ENCODE measurements at regions of chr11 and their contacts with region 1.

Region 1: DNA sequence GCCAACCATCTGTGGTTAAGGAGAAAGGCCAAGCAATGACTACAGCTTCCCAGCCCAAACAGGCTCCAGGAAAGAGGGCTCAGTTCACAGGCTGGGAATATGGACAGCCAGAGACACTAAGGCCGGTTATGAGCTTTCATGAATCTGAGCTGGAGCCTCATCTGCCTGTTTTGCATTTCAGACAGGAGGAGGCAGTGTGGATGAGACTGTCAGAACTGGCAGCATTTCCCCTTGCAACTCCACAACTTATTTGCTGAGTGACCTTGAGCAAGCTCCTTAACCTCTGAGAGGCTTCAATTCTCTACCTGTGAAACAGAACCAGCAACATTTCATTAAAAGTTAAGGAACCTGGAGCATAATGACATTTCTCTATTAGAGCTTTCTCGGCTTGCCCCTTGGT is 264.0 kb downstream of the ETS1 start:
- DNase-seq: peak; percentile 65
- H3K4me3 Mint-ChIP-seq: no peak overlapping the region
- H3K27ac Mint-ChIP-seq: peak overlapping the region; percentile 98
- H3K4me1 Mint-ChIP-seq: peaks cover 91% of the 10 kb centered on the region
- H3K27me3 Mint-ChIP-seq: no peaks in the 10 kb centered on the region

Region 2: GRCh38 chr11:128172046-128172878 is 151.1 kb before region 1 on chr11:
- CTCF ChIA-PET with region 1: interaction called, 14 read pairs
- POLR2A ChIA-PET with region 1: interaction called, 5 read pairs
- DNase-seq: peak; percentile 87
- H3K4me3 Mint-ChIP-seq: no peak overlapping the region
- H3K27ac Mint-ChIP-seq: no peak overlapping the region
- H3K4me1 Mint-ChIP-seq: peaks cover 13% of the 10 kb centered on the region
- H3K27me3 Mint-ChIP-seq: peaks cover 7% of the 10 kb centered on the region

Region 3: DNA sequence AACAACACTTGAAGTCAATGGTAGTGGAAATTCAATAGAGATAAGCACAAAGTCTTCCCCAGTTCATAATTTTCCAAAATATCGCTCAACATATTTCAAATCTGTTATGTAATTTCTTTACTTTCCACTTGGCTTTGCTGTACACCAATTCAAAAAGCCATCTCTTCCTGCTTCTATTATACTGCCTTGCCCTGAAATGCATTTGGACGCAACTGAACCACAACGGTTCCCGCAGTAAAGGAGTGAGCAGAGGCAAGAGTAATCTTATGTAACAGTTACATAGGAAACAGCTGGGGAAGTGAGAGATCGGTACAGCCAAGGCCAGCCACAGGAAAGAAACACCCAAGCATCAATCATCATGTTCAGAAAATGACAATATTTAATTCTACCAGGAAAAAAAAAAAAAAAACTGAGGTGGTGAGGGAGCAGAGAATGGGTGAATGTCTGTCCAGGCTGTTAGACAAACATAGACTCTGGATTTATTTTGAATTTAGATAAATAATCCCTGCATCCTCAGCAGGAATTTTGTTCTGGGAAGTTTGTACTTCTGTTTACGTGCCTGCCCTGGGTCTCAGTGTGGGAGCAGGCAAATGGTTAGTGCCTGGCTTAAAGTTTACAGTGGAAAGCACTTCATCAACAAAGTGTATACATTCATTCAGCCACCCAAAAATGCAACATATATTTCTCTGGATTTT is 128.2 kb before region 1 on chr11:
- CTCF ChIA-PET with region 1: no interaction called
- POLR2A ChIA-PET with region 1: no interaction called
- DNase-seq: peak; percentile 53
- H3K4me3 Mint-ChIP-seq: no peak overlapping the region
- H3K27ac Mint-ChIP-seq: no peak overlapping the region
- H3K4me1 Mint-ChIP-seq: peaks cover 33% of the 10 kb centered on the region
- H3K27me3 Mint-ChIP-seq: peaks cover 2% of the 10 kb centered on the region

Region 4: GRCh38 chr11:128311742-128312719 is 11.3 kb before region 1 on chr11:
- CTCF ChIA-PET with region 1: interaction called, 6 read pairs
- POLR2A ChIA-PET with region 1: interaction called, 12 read pairs
- DNase-seq: no peak
- H3K4me3 Mint-ChIP-seq: no peak overlapping the region
- H3K27ac Mint-ChIP-seq: no peak overlapping the region
- H3K4me1 Mint-ChIP-seq: peaks cover 49% of the 10 kb centered on the region
- H3K27me3 Mint-ChIP-seq: no peaks in the 10 kb centered on the region

Region 5: DNA sequence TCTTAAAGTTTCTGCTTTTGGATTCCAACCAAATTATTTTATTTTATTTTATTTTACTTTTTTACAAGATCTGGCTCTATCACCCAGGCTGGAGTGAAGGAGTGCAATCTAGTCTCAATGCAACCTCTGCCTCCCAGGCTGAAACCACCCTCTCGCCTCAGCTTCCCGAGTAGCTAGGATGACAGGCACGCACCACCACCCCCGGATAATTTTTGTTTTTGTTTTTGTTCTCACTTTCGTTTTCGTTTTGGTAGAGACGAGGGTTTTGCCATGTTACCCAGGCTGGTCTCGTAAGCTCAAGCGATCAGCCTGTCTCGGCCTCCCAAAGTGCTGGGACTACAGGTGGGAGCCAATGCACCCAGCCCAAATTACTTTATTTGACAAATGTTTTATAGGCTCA is 44.2 kb after region 1 on chr11:
- CTCF ChIA-PET with region 1: interaction called, 6 read pairs
- POLR2A ChIA-PET with region 1: interaction called, 14 read pairs
- DNase-seq: peak; percentile 58
- H3K4me3 Mint-ChIP-seq: peak overlapping the region; percentile 54
- H3K27ac Mint-ChIP-seq: peak overlapping the region; percentile 64
- H3K4me1 Mint-ChIP-seq: peaks cover 17% of the 10 kb centered on the region
- H3K27me3 Mint-ChIP-seq: peaks cover 3% of the 10 kb centered on the region

Region 6: GRCh38 chr11:128389461-128389976 is 66.1 kb after region 1 on chr11:
- CTCF ChIA-PET with region 1: no interaction called
- POLR2A ChIA-PET with region 1: no interaction called
- DNase-seq: no peak
- H3K4me3 Mint-ChIP-seq: no peak overlapping the region
- H3K27ac Mint-ChIP-seq: no peak overlapping the region
- H3K4me1 Mint-ChIP-seq: no peaks in the 10 kb centered on the region
- H3K27me3 Mint-ChIP-seq: no peaks in the 10 kb centered on the region

Region 7: DNA sequence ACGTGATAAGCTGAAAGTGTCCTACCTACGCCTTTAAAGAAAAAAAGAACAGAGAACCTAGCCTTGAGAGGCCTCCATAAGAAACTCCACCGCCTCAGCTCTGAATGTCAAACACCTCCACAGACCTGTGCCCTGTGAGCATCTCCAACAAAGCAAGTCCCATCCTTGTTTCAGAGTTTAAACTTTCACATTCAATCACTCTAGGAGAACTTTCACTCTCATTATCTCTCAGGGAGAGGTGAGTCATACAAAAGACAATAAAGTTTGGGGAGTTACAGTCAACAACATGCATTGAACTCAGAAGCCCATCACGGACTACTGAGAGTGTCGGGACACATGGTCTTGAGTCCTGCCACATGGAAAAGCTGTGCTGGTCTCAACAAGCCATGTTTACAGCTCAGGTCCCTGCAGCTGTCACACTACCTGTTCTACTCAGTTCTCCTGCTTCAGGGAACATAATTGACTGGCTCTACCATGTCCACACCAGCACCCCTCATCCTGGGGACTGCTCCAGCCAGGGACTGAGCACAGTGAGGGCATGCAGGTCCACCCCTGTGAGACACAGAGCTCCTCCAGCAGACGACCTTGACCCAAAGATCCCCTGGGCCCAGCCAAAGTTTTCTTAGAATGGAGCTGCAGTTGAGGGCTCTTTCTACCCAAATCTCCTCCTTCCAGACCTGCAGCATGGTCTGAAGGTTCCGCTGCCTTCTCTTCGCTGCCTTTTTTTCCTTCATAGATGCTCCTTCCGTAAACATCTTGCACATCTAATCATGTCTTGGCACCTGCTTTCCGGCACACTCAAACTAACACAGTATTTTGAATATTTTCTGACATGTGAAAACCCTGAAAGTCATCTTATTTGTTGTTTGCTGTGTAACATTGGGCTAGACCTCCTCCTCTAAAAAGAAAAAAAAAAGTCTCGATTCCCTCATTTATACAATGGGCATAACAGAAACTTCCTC is 149.0 kb after region 1 on chr11:
- CTCF ChIA-PET with region 1: interaction called, 10 read pairs
- POLR2A ChIA-PET with region 1: interaction called, 36 read pairs
- DNase-seq: no peak
- H3K4me3 Mint-ChIP-seq: peak overlapping the region; percentile 44
- H3K27ac Mint-ChIP-seq: peak overlapping the region; percentile 80
- H3K4me1 Mint-ChIP-seq: peaks cover 99% of the 10 kb centered on the region
- H3K27me3 Mint-ChIP-seq: no peaks in the 10 kb centered on the region

Region 8: DNA sequence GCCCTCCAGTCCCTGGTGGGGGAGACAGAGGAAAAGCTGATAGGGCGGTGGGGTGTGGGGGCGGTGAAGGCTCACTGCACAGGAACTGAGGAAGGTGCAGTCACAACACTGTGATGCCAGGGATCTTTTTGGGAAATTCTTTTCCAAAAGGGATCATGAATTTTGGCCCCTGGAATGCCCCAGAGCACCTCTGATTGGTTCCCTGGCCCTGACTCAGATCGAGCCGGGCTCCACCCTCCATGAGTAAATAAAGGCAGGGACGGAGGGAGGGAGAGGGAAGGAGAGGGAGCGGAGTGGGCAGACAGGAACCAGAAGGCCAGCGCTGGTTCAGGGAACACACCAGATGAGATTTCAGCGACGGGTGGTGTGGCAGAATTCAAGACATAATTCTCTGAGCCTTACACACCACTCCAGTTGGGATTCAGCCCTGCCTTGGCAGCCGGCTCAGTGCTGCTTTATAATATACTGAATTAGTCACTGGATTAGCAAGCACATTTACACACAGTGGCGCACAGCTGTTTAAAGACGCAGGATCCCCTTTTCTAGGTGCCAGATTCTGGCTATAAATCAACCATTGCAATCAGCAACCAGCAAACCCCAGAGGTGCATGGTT is 183.7 kb after region 1 on chr11:
- CTCF ChIA-PET with region 1: interaction called, 19 read pairs
- POLR2A ChIA-PET with region 1: interaction called, 17 read pairs
- DNase-seq: no peak
- H3K4me3 Mint-ChIP-seq: peak overlapping the region; percentile 69
- H3K27ac Mint-ChIP-seq: peak overlapping the region; percentile 71
- H3K4me1 Mint-ChIP-seq: peaks cover 99% of the 10 kb centered on the region
- H3K27me3 Mint-ChIP-seq: no peaks in the 10 kb centered on the region

Region 9: GRCh38 chr11:128624269-128625175 is 301.1 kb after region 1 on chr11:
- CTCF ChIA-PET with region 1: interaction called, 28 read pairs
- POLR2A ChIA-PET with region 1: interaction called, 16 read pairs
- DNase-seq: peak; percentile 75
- H3K4me3 Mint-ChIP-seq: peak overlapping the region; percentile 55
- H3K27ac Mint-ChIP-seq: peak overlapping the region; percentile 93
- H3K4me1 Mint-ChIP-seq: peaks cover 84% of the 10 kb centered on the region
- H3K27me3 Mint-ChIP-seq: no peaks in the 10 kb centered on the region

Measured in activated CD4-positive, alpha-beta memory T cell treated with anti-CD3 and anti-CD28 coated beads, Interleukin-2, amount 10 ng/mL, durations not matched to agents 7 days and 5 days (primary cell).